HepG2 (cell line): ENCODE measurements at regions of chr2 and their contacts with region 1.

Region 1: DNA sequence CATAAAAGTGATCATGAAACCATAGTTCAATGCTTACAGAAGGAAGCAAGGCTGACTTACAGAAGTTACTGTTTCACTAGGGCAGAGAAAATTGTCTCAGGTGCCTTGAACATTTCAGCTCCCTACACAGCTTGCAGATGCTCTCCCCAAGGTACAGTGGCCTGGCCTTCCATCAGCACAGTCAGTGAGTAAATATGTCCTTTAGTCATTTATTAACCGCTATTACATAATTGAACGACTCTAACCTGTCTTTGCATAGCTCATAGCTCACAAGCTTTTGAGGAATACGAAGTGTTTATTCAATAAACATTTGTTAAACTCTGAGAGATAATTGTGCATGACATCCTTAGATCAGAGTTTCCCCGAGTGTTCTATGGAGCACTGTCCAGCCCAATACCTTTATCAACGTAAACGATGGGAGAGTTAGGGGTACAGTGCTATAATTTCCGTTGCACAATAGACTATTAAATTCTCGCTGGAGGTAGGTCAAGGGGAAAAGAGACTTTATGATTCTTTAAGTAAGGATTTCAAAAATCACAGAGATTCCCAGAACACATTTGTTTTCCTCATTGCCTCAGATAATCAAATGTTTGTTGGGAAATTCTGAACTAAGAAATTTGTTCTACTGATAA is 677.8 kb downstream of the TSN start:
- DNase-seq: peak; percentile 84
- ATAC-seq: peak; percentile 100
- H3K4me3 ChIP-seq: no peak overlapping the region
- H3K27ac ChIP-seq: no peak overlapping the region
- H3K4me1 ChIP-seq: peaks cover 20% of the 10 kb centered on the region
- H3K27me3 ChIP-seq: no peaks in the 10 kb centered on the region; a peak in 2 of 5 replicates
- CTCF ChIP-seq: no peak
- EP300 ChIP-seq: peak in 1 of 2 experiments; percentile 82; a peak in 2 of 4 replicates
- POLR2A ChIP-seq: no peak
- RAD21 ChIP-seq: no peak

Region 2: GRCh38 chr2:122748552-122749011 is 315.3 kb after region 1 on chr2:
- CTCF ChIA-PET with region 1: no interaction called
- POLR2A ChIA-PET with region 1: no interaction called
- in situ Hi-C with region 1: no loop called
- intact Hi-C with region 1: loop called (anchors 10 kb)
- DNase-seq: peak; percentile 61
- ATAC-seq: peak; percentile 70
- H3K4me3 ChIP-seq: no peak overlapping the region
- H3K27ac ChIP-seq: no peak overlapping the region
- H3K4me1 ChIP-seq: peaks cover 16% of the 10 kb centered on the region; the same call in 1 of the 2 replicates
- H3K27me3 ChIP-seq: no peaks in the 10 kb centered on the region
- CTCF ChIP-seq: no peak
- EP300 ChIP-seq: no peak
- POLR2A ChIP-seq: no peak
- RAD21 ChIP-seq: no peak